PC-3 (cell line): ENCODE measurements at regions of chr14 and their contacts with region 1.

Region 1: DNA sequence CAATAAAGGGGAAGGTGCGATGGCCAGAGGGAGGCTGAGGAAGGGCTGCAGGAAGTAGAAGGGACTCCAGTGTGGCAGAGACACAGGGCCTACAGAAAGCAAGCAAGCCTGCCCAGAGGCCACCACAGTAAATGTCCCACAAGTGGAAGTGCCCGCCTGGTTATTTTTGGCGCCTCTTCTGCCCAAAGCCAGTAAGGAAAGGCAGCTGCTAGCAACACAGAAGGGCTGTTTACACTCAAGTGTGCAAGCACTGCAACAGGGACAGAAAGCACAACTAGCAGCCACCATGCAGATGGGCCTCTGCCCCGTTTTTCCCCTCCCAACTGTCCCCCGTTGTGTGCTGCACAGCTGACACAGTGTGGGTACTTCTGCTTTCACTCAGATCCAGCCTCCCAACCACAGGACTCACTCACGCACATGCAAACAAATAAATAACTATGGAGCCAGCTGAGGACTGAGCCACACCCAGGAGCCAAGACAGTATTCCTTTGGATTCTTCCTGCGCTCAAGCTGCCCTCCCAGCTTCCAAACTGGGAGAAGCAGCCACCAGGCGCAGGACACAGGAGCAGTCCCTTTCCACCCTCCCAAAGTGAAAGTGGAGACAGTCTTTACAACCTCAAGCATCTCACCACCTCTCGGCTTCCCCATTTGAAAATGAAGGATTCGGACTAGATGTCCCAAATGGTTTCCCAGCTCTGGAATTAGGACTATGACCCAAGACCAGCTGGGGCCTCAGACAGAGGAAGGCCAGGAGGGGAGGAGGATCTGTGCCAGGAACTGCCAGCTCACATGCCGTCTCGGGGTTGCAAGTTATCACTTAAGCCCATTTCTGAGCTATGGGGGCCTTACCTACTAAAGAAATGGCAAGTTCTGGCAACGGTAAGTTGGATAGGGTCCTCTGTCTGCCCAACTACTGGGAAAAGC is 40.0 kb upstream of the PNMA1 start:
- DNase-seq: peak; percentile 56
- ATAC-seq: peak; percentile 28
- H3K4me3 ChIP-seq: peak overlapping the region; percentile 8; the same call in 1 of the 2 replicates
- H3K27ac ChIP-seq: peak overlapping the region; percentile 74
- H3K4me1 ChIP-seq: peaks cover 77% of the 10 kb centered on the region
- H3K27me3 ChIP-seq: no peaks in the 10 kb centered on the region
- CTCF ChIP-seq: no peak

Region 2: GRCh38 chr14:73785873-73786695 is 31.9 kb after region 1 on chr14:
- CTCF ChIA-PET with region 1: no interaction called
- POLR2A ChIA-PET with region 1: interaction called, 6 read pairs
- intact Hi-C with region 1: loop called (anchors 5 kb)
- DNase-seq: peak; percentile 86
- ATAC-seq: peak; percentile 47
- H3K4me3 ChIP-seq: peak overlapping the region; percentile 73
- H3K27ac ChIP-seq: peak overlapping the region; percentile 97
- H3K4me1 ChIP-seq: peaks cover 56% of the 10 kb centered on the region
- H3K27me3 ChIP-seq: no peaks in the 10 kb centered on the region
- CTCF ChIP-seq: no peak

Region 3: GRCh38 chr14:73795972-73796371 is 41.8 kb after region 1 on chr14:
- CTCF ChIA-PET with region 1: no interaction called
- POLR2A ChIA-PET with region 1: interaction called, 21 read pairs
- intact Hi-C with region 1: no loop called
- DNase-seq: peak; percentile 97
- ATAC-seq: peak; percentile 96
- H3K4me3 ChIP-seq: no peak overlapping the region
- H3K27ac ChIP-seq: peak overlapping the region; percentile 67
- H3K4me1 ChIP-seq: peaks cover 30% of the 10 kb centered on the region
- H3K27me3 ChIP-seq: no peaks in the 10 kb centered on the region
- CTCF ChIP-seq: no peak

Region 4: DNA sequence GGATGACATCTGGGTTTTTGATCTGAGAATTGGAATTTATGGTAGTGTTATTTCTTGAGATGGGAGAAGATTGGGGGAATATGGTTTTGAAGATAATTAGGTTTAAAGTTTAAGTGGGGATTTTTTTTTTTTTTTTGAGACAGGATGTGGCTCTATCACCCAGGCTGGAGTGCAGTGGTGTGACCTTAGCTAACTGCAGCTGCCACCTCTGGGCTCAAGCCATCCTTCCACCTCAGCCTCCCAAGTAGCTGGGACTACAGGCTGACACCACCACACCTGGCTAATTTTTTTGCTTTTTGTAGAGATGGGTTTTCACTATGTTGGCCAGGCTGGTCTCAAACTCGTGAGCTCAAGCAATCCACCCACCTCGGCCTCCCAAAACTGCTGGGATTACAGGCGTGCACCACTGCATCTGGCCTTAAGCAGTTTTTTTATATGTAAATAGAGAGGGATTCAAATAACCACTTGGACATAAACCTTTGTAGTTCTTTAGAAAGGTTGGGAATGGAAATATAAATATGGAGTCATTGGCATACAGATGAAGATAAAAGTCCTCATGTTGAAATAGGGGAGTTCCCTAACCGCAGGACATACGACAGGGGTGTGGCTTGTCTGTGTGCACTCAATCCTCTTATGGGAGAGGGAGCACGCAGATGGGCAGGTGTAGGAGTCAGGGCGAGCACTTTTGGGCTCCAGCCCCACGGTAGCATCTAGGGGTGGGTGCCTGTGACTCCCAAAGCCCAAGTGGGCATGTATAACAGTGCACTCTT is 335.2 kb after region 1 on chr14:
- CTCF ChIA-PET with region 1: no interaction called
- POLR2A ChIA-PET with region 1: no interaction called
- intact Hi-C with region 1: no loop called
- DNase-seq: no peak
- ATAC-seq: no peak
- H3K4me3 ChIP-seq: no peak overlapping the region
- H3K27ac ChIP-seq: no peak overlapping the region
- H3K4me1 ChIP-seq: peaks cover 10% of the 10 kb centered on the region
- H3K27me3 ChIP-seq: no peaks in the 10 kb centered on the region
- CTCF ChIP-seq: no peak

Region 5: GRCh38 chr14:74955229-74956026 is 1201.2 kb after region 1 on chr14 and contains the start of gene PGF:
- CTCF ChIA-PET with region 1: no interaction called
- POLR2A ChIA-PET with region 1: no interaction called
- intact Hi-C with region 1: no loop called
- DNase-seq: peak; percentile 15
- ATAC-seq: peak; percentile 59
- H3K4me3 ChIP-seq: peak within 1 kb of the TSS; percentile 56
- H3K27ac ChIP-seq: no peak within 1 kb of the TSS
- H3K4me1 ChIP-seq: peaks cover 11% of the 10 kb centered on the region
- H3K27me3 ChIP-seq: no peaks in the 10 kb centered on the region
- CTCF ChIP-seq: no peak
- total RNA-seq, gene PGF: 0.26 and 1.5 TPM in 2 replicates

Region 6: DNA sequence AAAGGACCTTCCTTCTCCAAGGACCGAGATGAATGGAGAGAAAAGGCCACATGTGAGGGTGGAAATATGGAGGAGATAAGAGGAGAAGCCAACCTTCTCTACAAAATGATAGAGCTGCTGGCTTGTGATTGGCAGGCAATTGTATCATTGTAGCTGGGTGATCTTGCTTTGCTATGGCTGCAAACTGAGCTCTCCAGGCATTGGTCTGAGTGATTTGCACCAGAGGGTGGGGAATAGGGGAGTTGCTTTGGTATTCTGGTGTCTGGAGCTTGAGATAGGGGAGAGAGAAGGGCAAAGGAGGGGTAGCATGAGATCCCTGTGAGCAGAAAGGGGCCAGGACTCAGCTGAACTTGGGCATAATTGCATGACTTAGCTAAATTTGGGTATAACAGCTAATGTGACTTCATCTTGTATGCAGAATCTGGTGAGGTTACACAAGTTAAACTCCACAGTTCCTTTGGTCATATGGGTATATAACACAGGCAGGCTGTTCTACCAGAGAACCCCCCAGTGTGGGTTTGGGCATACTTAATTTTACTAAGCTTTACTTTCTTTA is 1596.4 kb after region 1 on chr14:
- CTCF ChIA-PET with region 1: no interaction called
- POLR2A ChIA-PET with region 1: no interaction called
- intact Hi-C with region 1: no loop called
- DNase-seq: no peak
- ATAC-seq: no peak
- H3K4me3 ChIP-seq: no peak overlapping the region
- H3K27ac ChIP-seq: no peak overlapping the region
- H3K4me1 ChIP-seq: no peaks in the 10 kb centered on the region
- H3K27me3 ChIP-seq: peaks cover 32% of the 10 kb centered on the region
- CTCF ChIP-seq: no peak